ENCODE measurements at regions of chr1 and their contacts with region 1.

Region 1: GRCh38 chr1:184222652-184223052 is 164.2 kb upstream of the C1orf21 start:
- DNase-seq: peak; percentile 53 to 65
- H3K4me3 ChIP-seq: no peak overlapping the region
- H3K27ac ChIP-seq: no peak overlapping the region
- H3K4me1 ChIP-seq: peaks cover 0 to 7% (median 4%) of the 10 kb centered on the region in 4 donors
- H3K27me3 ChIP-seq: no peaks in the 10 kb centered on the region
- CTCF ChIP-seq: peak in 6 of 7 experiments; percentile 76 to 96 (median 93)
- EP300 ChIP-seq: no peak
- POLR2A ChIP-seq: no peak

Region 2: DNA sequence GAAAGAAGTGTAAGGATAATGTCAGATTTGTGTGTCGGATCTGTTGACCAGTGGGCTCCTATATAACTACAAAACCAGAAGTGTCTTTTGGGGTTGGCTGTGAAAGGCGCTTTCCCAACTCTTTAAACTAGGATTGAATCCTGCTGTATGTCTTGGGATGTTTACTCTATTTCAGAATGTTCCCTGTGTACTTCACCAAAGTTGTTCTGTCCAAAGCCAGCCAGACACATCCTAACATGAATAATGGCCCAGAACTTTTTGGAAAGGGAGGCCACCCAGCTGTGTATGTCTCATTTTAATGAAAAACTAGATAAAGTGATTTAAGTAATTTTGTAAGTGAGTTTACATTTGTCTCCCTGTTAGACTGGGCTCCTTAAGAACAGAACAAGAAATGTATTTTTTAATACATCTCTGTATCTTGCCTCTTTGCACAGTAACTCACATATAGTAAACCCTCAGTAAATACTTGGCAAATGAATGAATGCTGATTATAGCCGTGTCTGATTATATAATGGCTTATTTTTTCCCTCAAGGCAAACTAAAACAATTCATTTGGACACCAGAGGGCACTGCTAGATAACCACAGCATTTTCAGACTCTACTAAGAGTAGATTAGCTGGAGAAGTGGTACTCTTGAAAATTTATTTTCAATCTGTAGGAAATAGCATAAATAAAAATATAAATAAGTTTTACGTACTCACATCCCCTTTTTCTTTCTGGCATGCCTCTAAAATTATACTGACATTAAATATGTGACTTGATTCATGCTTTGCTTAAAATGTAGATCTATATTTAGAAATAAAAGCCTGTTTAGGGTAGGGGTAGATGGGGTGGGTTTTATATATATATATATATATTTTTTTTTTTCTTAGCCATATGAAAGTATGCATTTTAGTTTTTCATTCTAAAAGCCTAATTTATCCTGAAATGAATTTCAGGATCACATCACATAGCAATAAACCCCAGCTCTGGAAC is 147.3 kb before region 1 on chr1:
- intact Hi-C with region 1: loop called (anchors 5 kb)
- DNase-seq: peak in 1 of 2 donors; percentile 88
- H3K4me3 ChIP-seq: no peak overlapping the region
- H3K27ac ChIP-seq: peak overlapping the region in 2 of 5 donors; percentile 11 to 65
- H3K4me1 ChIP-seq: peaks cover 0 to 34% (median 10%) of the 10 kb centered on the region in 4 donors
- H3K27me3 ChIP-seq: no peaks in the 10 kb centered on the region
- CTCF ChIP-seq: peak in 5 of 7 experiments; percentile 42 to 65 (median 62)
- EP300 ChIP-seq: no peak
- POLR2A ChIP-seq: no peak